ENCODE measurements at regions of chr20 and their contacts with region 1.

Region 1: GRCh38 chr20:2005831-2006426 is 12.1 kb upstream of the PDYN start:
- DNase-seq: no peak
- H3K4me3 ChIP-seq: no peak overlapping the region
- H3K27me3 ChIP-seq: 0 out of 2 replicates have a peak, but pooled peaks cover 2% of the 10 kb centered on the region
- CTCF ChIP-seq: 0 out of 2 replicates have a peak, but pooled peaks have one; percentile 2

Region 2: DNA sequence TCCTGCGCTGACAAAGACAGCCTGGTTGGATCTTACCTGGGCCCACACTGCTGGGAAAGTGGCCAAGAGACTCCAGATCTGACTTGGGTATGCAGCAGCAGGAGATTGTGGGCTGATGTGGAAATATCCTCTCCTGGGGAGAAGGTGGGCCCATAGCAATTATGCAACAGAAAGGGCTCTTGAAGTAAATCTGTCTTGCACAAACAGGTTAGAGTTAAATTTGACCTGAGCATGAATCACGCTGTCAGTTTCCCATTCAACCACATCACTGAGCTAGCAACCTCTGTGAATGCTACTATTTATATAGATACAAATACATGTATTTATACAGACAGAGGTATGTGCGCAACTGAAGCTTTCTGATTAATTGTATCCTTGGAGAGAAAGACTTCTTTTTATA is 16.2 kb after region 1 on chr20:
- CTCF ChIA-PET with region 1: interaction called, 25 read pairs
- POLR2A ChIA-PET with region 1: no interaction called
- DNase-seq: no peak
- H3K4me3 ChIP-seq: no peak overlapping the region
- H3K27me3 ChIP-seq: no peaks in the 10 kb centered on the region
- CTCF ChIP-seq: no peak

Region 3: GRCh38 chr20:2178318-2179232 is 172.6 kb after region 1 on chr20:
- CTCF ChIA-PET with region 1: interaction called, 120 read pairs
- POLR2A ChIA-PET with region 1: no interaction called
- DNase-seq: no peak
- H3K4me3 ChIP-seq: no peak overlapping the region
- H3K27me3 ChIP-seq: peaks cover 2% of the 10 kb centered on the region; the same call in 1 of the 2 replicates
- CTCF ChIP-seq: no peak

Region 4: DNA sequence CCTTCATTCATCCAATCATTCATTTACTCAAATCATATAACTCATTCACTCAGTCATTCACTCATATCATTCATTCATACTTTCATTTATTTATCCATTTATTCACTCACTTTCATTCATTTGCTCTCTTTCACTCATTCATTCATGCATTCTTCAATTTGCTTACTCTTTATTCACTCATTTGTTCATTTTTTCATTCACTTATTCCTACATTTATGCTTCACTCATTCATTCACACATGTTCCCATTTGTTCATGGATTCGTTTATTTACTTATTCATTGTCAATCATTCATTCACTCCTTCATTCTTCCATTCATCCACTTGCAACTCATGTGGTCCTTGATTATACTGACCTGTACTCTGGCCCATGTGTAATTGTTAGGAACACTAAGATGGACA is 425.3 kb after region 1 on chr20:
- CTCF ChIA-PET with region 1: no interaction called
- POLR2A ChIA-PET with region 1: no interaction called
- DNase-seq: no peak
- H3K4me3 ChIP-seq: no peak overlapping the region
- H3K27me3 ChIP-seq: 0 out of 2 replicates have a peak, but pooled peaks cover 2% of the 10 kb centered on the region
- CTCF ChIP-seq: no peak

Measured in BJ (cell line).